ENCODE measurements at regions of chrX and their contacts with region 1.

Region 1: DNA sequence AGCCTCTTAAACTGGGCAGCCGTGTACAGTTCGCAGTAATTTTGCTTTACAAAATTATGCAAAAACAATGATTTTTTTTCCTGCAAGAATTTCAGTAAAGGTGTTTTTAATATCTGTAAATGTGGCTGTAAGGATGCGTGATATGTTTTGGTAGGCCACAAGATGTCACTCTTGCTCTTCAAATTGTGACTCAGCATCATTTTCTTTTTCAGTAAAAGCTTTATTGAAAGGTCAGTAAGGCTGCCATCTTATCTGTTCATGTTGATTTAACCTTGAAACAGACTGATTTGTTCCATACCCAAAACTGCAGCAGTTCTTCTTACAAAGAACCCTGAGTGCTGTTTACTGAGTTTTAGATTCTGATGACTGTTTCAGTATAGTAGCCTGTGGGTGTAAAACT is 39.9 kb downstream of the TXLNG start:
- DNase-seq: no peak

Region 2: DNA sequence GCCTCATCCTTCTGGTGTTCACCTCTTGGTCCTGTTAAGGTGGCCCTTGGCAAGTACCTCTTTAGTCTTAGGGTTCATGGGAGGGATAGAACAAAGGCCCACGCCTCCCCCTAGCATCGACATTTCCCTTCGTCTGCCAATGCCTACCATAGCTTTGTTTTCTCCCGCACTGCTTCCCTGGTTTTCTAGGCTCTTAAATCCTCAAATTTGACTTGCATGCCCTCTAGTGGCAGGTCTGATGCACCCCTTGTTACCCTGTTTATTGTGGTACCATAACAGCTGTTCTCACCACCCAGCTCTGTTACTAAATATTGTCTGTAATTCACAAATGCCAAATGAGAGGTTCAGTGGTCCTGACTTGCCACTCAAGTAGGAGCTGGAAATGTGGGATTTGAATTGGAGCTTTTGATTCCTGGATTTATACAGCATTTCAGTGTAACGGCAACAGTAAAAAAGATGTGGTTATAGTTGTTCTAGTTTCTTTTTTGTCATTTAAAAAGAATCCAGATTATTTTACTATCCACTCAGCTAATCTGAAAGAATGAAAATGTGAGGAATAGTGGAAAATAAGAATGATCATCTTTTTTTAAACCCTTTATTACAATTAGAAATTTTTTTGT is 220.4 kb after region 1 on chrX:
- intact Hi-C with region 1: loop called (anchors 2 kb)
- DNase-seq: no peak

Region 3: GRCh38 chrX:17278961-17279360 is 452.8 kb after region 1 on chrX:
- intact Hi-C with region 1: no loop called
- DNase-seq: no peak

Measured in cardiac septum (tissue), 1 donor.